CD4-positive, alpha-beta memory T cell (primary cell): ENCODE measurements at regions of chrX and their contacts with region 1.

Region 1: GRCh38 chrX:119693040-119693995 is at the start of gene SEPTIN6:
- DNase-seq: peak; percentile 85 to 93 (median 93)
- H3K4me3 ChIP-seq: peak within 1 kb of the TSS; percentile 55 to 75
- H3K4me3 Mint-ChIP-seq: peak within 1 kb of the TSS; percentile 93 to 100 (median 98)
- H3K27ac ChIP-seq: peak within 1 kb of the TSS; percentile 89
- H3K27ac Mint-ChIP-seq: peak within 1 kb of the TSS; percentile 93 to 99 (median 98)
- H3K4me1 ChIP-seq: peaks cover 27% of the 10 kb centered on the region
- H3K4me1 Mint-ChIP-seq: peaks cover 9 to 38% (median 27%) of the 10 kb centered on the region in 4 donors
- H3K27me3 ChIP-seq: no peaks in the 10 kb centered on the region
- H3K27me3 Mint-ChIP-seq: no peaks in the 10 kb centered on the region
- total RNA-seq, gene SEPTIN6: 174 to 178 TPM

Region 2: DNA sequence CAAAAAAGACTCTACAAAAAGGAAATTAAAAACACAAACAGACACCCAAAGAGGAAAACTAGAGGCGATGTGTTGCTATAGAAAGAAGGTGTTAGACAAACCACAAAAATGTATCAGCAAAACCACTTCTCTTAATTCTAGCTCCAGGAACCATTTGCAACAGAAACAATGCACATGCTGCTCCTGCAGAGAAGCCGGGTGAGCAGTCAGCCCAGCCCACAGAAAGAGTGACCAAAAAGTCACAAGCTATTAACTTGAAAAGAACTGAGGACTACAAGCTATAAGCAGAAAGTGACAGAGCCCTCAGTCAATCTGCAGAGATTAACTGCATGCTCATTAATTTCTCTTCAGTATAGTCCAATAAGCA is 1480.5 kb before region 1 on chrX:
- CTCF ChIA-PET with region 1: no interaction called
- POLR2A ChIA-PET with region 1: no interaction called
- intact Hi-C with region 1: no loop called
- DNase-seq: no peak
- H3K4me3 ChIP-seq: no peak overlapping the region
- H3K4me3 Mint-ChIP-seq: no peak overlapping the region
- H3K27ac ChIP-seq: no peak overlapping the region
- H3K27ac Mint-ChIP-seq: no peak overlapping the region
- H3K4me1 ChIP-seq: no peaks in the 10 kb centered on the region
- H3K4me1 Mint-ChIP-seq: no peaks in the 10 kb centered on the region
- H3K27me3 ChIP-seq: no peaks in the 10 kb centered on the region
- H3K27me3 Mint-ChIP-seq: peaks cover 3% of the 10 kb centered on the region in 2 donors

Region 3: GRCh38 chrX:119574394-119575266 is 118.7 kb before region 1 on chrX and contains the start of gene UBE2A:
- CTCF ChIA-PET with region 1: interaction called, 3 read pairs
- POLR2A ChIA-PET with region 1: interaction called, 12 read pairs
- intact Hi-C with region 1: no loop called
- DNase-seq: peak; percentile 86 to 89 (median 89)
- H3K4me3 ChIP-seq: peak within 1 kb of the TSS in 1 of 2 donors; percentile 63
- H3K4me3 Mint-ChIP-seq: peak within 1 kb of the TSS; percentile 85 to 94 (median 92)
- H3K27ac ChIP-seq: peak within 1 kb of the TSS; percentile 78
- H3K27ac Mint-ChIP-seq: peak within 1 kb of the TSS; percentile 88 to 98 (median 96)
- H3K4me1 ChIP-seq: peaks cover 22% of the 10 kb centered on the region
- H3K4me1 Mint-ChIP-seq: peaks cover 2 to 33% (median 16%) of the 10 kb centered on the region in 4 donors
- H3K27me3 ChIP-seq: no peaks in the 10 kb centered on the region
- H3K27me3 Mint-ChIP-seq: no peaks in the 10 kb centered on the region
- total RNA-seq, gene UBE2A: 46.7 to 52.5 TPM

Region 4: DNA sequence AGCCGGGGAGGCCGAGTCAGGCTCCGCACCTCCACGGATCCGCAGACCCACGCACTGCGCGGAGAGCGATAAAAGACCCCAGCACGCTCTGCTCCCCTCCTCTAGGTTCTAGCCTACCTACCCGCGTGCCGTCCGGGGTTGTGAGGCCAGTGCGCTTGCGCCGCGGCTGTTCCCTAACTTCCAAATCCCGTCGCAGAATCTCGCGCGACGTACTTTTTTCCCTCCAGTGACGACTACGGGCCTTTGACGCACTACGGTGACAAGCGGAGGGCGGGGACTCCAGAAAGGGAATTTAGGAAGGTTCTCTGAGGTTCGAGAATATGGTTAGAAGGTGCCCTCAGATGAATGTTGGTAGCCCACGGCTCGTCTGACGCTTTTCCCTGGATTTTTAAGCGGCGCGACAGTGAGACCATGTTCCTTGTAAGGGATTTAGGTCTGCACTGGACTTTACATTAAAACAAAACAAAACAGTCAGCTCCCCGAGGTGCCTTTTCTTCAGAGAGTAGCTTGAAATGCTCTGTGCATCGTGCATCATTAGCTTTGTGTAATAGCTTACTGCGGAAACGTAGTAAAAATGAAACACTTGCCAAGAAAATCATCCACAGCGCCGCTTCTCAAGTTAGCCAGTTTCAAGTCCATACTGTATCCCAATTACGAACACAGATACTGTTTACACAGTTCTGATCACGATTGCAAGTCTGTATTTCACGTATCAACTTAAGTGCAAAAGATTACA is 86.9 kb before region 1 on chrX and contains the start of gene NKRF:
- CTCF ChIA-PET with region 1: interaction called, 3 read pairs
- POLR2A ChIA-PET with region 1: interaction called, 23 read pairs
- intact Hi-C with region 1: loop called (anchors 1 kb)
- DNase-seq: peak; percentile 87 to 94 (median 89)
- H3K4me3 ChIP-seq: peak within 1 kb of the TSS; percentile 73 to 84
- H3K4me3 Mint-ChIP-seq: peak within 1 kb of the TSS; percentile 91 to 97 (median 95)
- H3K27ac ChIP-seq: peak within 1 kb of the TSS; percentile 85
- H3K27ac Mint-ChIP-seq: peak within 1 kb of the TSS; percentile 93 to 99 (median 99)
- H3K4me1 ChIP-seq: peaks cover 26% of the 10 kb centered on the region
- H3K4me1 Mint-ChIP-seq: peaks cover 10 to 46% (median 28%) of the 10 kb centered on the region in 4 donors
- H3K27me3 ChIP-seq: no peaks in the 10 kb centered on the region
- H3K27me3 Mint-ChIP-seq: no peaks in the 10 kb centered on the region
- total RNA-seq, gene NKRF: 13.0 to 14.2 TPM

Region 5: DNA sequence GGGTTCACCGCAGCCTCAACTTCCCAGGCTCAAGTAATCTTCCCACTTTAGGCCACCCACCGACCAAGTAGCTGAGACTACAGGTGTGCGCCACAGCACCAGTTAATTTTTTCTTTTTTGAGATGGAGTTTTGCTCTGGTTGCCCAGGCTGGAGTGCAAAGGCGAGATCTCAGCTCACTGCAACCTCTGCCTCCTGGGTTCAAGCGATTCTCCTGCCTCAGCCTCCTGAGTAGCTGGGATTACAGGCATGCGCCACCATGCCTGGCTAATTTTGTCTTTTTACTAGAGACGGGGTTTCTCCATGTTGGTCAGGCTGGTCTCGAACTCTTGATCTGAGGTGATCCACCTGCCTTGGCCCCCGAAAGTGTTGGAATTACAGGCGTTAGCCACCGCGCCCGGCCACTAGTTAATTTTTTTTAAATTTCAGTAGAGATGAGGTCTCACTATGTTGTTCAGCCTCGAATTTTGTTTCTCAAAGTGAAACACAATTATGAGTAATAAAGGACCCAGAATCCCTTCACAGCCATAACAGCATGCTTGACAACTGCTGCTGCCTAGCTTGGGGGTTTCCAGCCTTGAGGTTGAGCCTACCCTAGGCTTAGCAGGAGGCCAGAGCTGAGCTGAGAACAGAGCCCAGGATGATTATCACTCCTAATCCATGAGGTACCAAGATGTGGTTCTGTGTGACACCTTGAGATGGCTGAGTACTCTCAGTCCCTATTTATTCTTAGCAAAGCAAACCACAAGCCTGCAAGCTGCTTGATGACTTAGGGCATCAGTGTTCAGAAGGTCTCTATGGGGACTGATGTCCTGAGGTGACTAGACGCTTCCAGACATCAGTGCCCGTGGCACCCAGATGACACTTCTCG is 45.5 kb before region 1 on chrX:
- CTCF ChIA-PET with region 1: interaction called, 4 read pairs
- POLR2A ChIA-PET with region 1: interaction called, 48 read pairs
- intact Hi-C with region 1: loop called (anchors 1 kb)
- DNase-seq: peak; percentile 52 to 89 (median 55)
- H3K4me3 ChIP-seq: no peak overlapping the region
- H3K4me3 Mint-ChIP-seq: peak overlapping the region in 7 of 8 donors; percentile 39 to 77 (median 52)
- H3K27ac ChIP-seq: peak overlapping the region; percentile 55
- H3K27ac Mint-ChIP-seq: peak overlapping the region; percentile 89 to 96 (median 93)
- H3K4me1 ChIP-seq: peaks cover 37% of the 10 kb centered on the region
- H3K4me1 Mint-ChIP-seq: peaks cover 14 to 51% (median 31%) of the 10 kb centered on the region in 4 donors
- H3K27me3 ChIP-seq: no peaks in the 10 kb centered on the region
- H3K27me3 Mint-ChIP-seq: no peaks in the 10 kb centered on the region

Region 6: GRCh38 chrX:119655125-119655524 is 38.2 kb before region 1 on chrX:
- CTCF ChIA-PET with region 1: interaction called, 4 read pairs
- POLR2A ChIA-PET with region 1: interaction called, 48 read pairs
- intact Hi-C with region 1: no loop called
- DNase-seq: peak in 2 of 5 donors; percentile 41 to 79
- H3K4me3 ChIP-seq: no peak overlapping the region
- H3K4me3 Mint-ChIP-seq: peak overlapping the region in 5 of 8 donors; percentile 40 to 72 (median 59)
- H3K27ac ChIP-seq: peak overlapping the region; percentile 41
- H3K27ac Mint-ChIP-seq: peak overlapping the region; percentile 80 to 96 (median 91)
- H3K4me1 ChIP-seq: peaks cover 24% of the 10 kb centered on the region
- H3K4me1 Mint-ChIP-seq: peaks cover 26 to 50% (median 42%) of the 10 kb centered on the region in 4 donors
- H3K27me3 ChIP-seq: no peaks in the 10 kb centered on the region
- H3K27me3 Mint-ChIP-seq: no peaks in the 10 kb centered on the region

Region 7: GRCh38 chrX:119661486-119661885 is 31.8 kb before region 1 on chrX:
- CTCF ChIA-PET with region 1: interaction called, 4 read pairs
- POLR2A ChIA-PET with region 1: interaction called, 48 read pairs
- intact Hi-C with region 1: no loop called
- DNase-seq: no peak
- H3K4me3 ChIP-seq: no peak overlapping the region
- H3K4me3 Mint-ChIP-seq: peak overlapping the region in 1 of 8 donors; percentile 31
- H3K27ac ChIP-seq: no peak overlapping the region
- H3K27ac Mint-ChIP-seq: peak overlapping the region in 3 of 7 donors; percentile 65 to 69 (median 65)
- H3K4me1 ChIP-seq: peaks cover 5% of the 10 kb centered on the region
- H3K4me1 Mint-ChIP-seq: peaks cover 18 to 38% (median 28%) of the 10 kb centered on the region in 4 donors
- H3K27me3 ChIP-seq: no peaks in the 10 kb centered on the region
- H3K27me3 Mint-ChIP-seq: no peaks in the 10 kb centered on the region

Region 8: GRCh38 chrX:119676949-119677653 is 16.2 kb before region 1 on chrX:
- CTCF ChIA-PET with region 1: interaction called, 77 read pairs
- POLR2A ChIA-PET with region 1: interaction called, 277 read pairs
- intact Hi-C with region 1: loop called (anchors 1 kb)
- DNase-seq: no peak
- H3K4me3 ChIP-seq: peak overlapping the region in 1 of 2 donors; percentile 40
- H3K4me3 Mint-ChIP-seq: peak overlapping the region; percentile 86 to 95 (median 92)
- H3K27ac ChIP-seq: peak overlapping the region; percentile 60
- H3K27ac Mint-ChIP-seq: peak overlapping the region; percentile 94 to 98 (median 97)
- H3K4me1 ChIP-seq: peaks cover 81% of the 10 kb centered on the region
- H3K4me1 Mint-ChIP-seq: peaks cover 30 to 80% (median 61%) of the 10 kb centered on the region in 4 donors
- H3K27me3 ChIP-seq: no peaks in the 10 kb centered on the region
- H3K27me3 Mint-ChIP-seq: no peaks in the 10 kb centered on the region